ENCODE measurements at regions of chr3 and their contacts with region 1.

Region 1: GRCh38 chr3:151434151-151434890 is 26.5 kb downstream of the IGSF10 start:
- DNase-seq: peak; percentile 92
- ATAC-seq: peak; percentile 83
- H3K4me3 ChIP-seq: peak overlapping the region; percentile 18; the same call in 1 of the 2 replicates
- H3K27ac ChIP-seq: peak overlapping the region; percentile 95
- H3K4me1 ChIP-seq: peaks cover 65% of the 10 kb centered on the region
- H3K27me3 ChIP-seq: no peaks in the 10 kb centered on the region
- CTCF ChIP-seq: no peak

Region 2: GRCh38 chr3:151227807-151228665 is 206.3 kb before region 1 on chr3:
- CTCF ChIA-PET with region 1: interaction called, 3 read pairs
- POLR2A ChIA-PET with region 1: no interaction called
- intact Hi-C with region 1: loop called (anchors 5 kb)
- DNase-seq: peak; percentile 81
- ATAC-seq: peak; percentile 82
- H3K4me3 ChIP-seq: no peak overlapping the region
- H3K27ac ChIP-seq: peak overlapping the region; percentile 63
- H3K4me1 ChIP-seq: peaks cover 31% of the 10 kb centered on the region
- H3K27me3 ChIP-seq: no peaks in the 10 kb centered on the region
- CTCF ChIP-seq: peak; percentile 97

Region 3: GRCh38 chr3:151305101-151305750 is 129.1 kb before region 1 on chr3:
- CTCF ChIA-PET with region 1: interaction called, 4 read pairs
- POLR2A ChIA-PET with region 1: interaction called, 3 read pairs
- intact Hi-C with region 1: loop called (anchors 1 kb)
- DNase-seq: peak; percentile 98
- ATAC-seq: peak; percentile 79
- H3K4me3 ChIP-seq: peak overlapping the region; percentile 62
- H3K27ac ChIP-seq: peak overlapping the region; percentile 95
- H3K4me1 ChIP-seq: peaks cover 84% of the 10 kb centered on the region
- H3K27me3 ChIP-seq: no peaks in the 10 kb centered on the region
- CTCF ChIP-seq: peak; percentile 43

Region 4: GRCh38 chr3:151356794-151357462 is 77.4 kb before region 1 on chr3:
- CTCF ChIA-PET with region 1: no interaction called
- POLR2A ChIA-PET with region 1: no interaction called
- intact Hi-C with region 1: loop called (anchors 2 kb)
- DNase-seq: peak; percentile 43
- ATAC-seq: peak; percentile 94
- H3K4me3 ChIP-seq: no peak overlapping the region
- H3K27ac ChIP-seq: no peak overlapping the region
- H3K4me1 ChIP-seq: peaks cover 14% of the 10 kb centered on the region; the same call in 1 of the 2 replicates
- H3K27me3 ChIP-seq: no peaks in the 10 kb centered on the region
- CTCF ChIP-seq: no peak

Region 5: DNA sequence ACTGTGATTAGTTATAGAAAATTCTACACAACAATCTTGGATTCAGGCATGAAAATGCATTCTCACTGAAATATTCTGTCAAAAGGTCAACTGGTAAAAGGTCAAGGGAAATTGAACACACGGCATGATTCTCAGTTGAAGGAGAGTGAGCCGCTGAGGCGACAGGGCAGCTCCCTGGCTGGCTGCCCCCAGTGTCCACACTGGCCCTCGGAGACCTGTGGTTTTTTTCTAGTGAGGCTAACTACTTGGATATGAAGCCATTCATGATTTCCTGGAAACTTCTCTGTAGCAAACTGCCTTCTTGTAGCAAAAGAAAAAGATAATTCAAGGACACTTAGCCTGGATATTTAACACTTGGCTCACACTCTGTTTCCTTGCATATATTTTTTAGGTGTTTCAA is 336.6 kb after region 1 on chr3:
- CTCF ChIA-PET with region 1: no interaction called
- POLR2A ChIA-PET with region 1: no interaction called
- intact Hi-C with region 1: loop called (anchors 1 kb)
- DNase-seq: peak; percentile 21
- ATAC-seq: 0 out of 2 replicates have a peak, but pooled peaks have one; percentile 5
- H3K4me3 ChIP-seq: no peak overlapping the region
- H3K27ac ChIP-seq: peak overlapping the region; percentile 88
- H3K4me1 ChIP-seq: peaks cover 38% of the 10 kb centered on the region
- H3K27me3 ChIP-seq: no peaks in the 10 kb centered on the region
- CTCF ChIP-seq: no peak

Region 6: GRCh38 chr3:151976211-151977050 is 542.1 kb after region 1 on chr3:
- CTCF ChIA-PET with region 1: no interaction called
- POLR2A ChIA-PET with region 1: no interaction called
- intact Hi-C with region 1: loop called (anchors 1 kb)
- DNase-seq: peak; percentile 98
- ATAC-seq: peak; percentile 94
- H3K4me3 ChIP-seq: peak overlapping the region; percentile 30; the same call in 1 of the 2 replicates
- H3K27ac ChIP-seq: peak overlapping the region; percentile 88
- H3K4me1 ChIP-seq: peaks cover 58% of the 10 kb centered on the region
- H3K27me3 ChIP-seq: no peaks in the 10 kb centered on the region
- CTCF ChIP-seq: no peak; the same call in 1 of the 2 replicates

Measured in PC-3 (cell line).